Activated T-helper 1 cell treated with anti-CD3 and anti-CD28 coated beads, Interleukin-12 subunit alpha, Interleukin-12 subunit beta, Interleukin-2, Interleukin-4 antibody, amounts not matched to agents 30 ng/mL and 10 ng/mL and 1 ng/mL, durations not matched to agents 14 hours and 24 hours and 36 hours (primary cell): ENCODE measurements at regions of chr7 and their contacts with region 1.

Region 1: GRCh38 chr7:91089382-91089963 is 174.8 kb upstream of the FZD1 start:
- DNase-seq: no peak
- H3K4me3 Mint-ChIP-seq: no peak overlapping the region
- H3K27ac Mint-ChIP-seq: no peak overlapping the region
- H3K4me1 Mint-ChIP-seq: peaks cover 11% of the 10 kb centered on the region
- H3K27me3 Mint-ChIP-seq: peaks cover 9% of the 10 kb centered on the region

Region 2: DNA sequence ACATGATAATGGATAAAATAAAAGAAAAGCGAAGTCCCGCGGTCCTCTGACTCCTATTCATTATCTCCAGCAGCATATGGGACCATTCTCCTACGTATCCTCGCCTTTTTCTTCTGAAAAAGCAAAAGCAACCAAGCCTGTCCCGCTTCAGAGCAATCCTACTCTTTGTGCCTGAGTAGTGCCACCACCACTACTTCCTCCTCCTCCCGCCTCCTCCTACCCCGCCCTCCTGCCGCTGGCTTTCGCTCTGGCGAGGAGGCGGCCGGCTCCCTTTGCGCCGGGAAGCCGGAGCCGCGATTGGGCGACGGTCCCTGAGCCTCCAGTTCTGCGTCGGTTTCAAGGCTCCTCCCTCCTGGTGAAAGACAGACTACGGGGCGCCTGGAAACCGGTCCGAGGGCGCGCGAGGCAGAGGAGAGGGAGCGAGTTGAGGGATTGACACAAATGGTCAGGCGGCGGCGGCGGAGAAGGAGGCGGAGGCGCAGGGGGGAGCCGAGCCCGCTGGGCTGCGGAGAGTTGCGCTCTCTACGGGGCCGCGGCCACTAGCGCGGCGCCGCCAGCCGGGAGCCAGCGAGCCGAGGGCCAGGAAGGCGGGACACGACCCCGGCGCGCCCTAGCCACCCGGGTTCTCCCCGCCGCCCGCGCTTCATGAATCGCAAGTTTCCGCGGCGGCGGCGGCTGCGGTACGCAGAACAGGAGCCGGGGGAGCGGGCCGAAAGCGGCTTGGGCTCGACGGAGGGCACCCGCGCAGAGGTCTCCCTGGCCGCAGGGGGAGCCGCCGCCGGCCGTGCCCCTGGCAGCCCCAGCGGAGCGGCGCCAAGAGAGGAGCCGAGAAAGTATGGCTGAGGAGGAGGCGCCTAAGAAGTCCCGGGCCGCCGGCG is 174.8 kb after region 1 on chr7 and contains the start of gene FZD1:
- intact Hi-C with region 1: loop called (anchors 5 kb)
- DNase-seq: peak; percentile 66
- H3K4me3 Mint-ChIP-seq: peak within 1 kb of the TSS; percentile 88
- H3K27ac Mint-ChIP-seq: peak within 1 kb of the TSS; percentile 74
- H3K4me1 Mint-ChIP-seq: no peaks in the 10 kb centered on the region
- H3K27me3 Mint-ChIP-seq: peaks cover 47% of the 10 kb centered on the region
- total RNA-seq, gene FZD1: 0.70 and 0.86 TPM in 2 replicates

Region 3: GRCh38 chr7:91784463-91784862 is 695.0 kb after region 1 on chr7:
- intact Hi-C with region 1: loop called (anchors 5 kb)
- DNase-seq: no peak
- H3K4me3 Mint-ChIP-seq: no peak overlapping the region
- H3K27ac Mint-ChIP-seq: no peak overlapping the region
- H3K4me1 Mint-ChIP-seq: no peaks in the 10 kb centered on the region
- H3K27me3 Mint-ChIP-seq: no peaks in the 10 kb centered on the region